Gastrocnemius medialis (tissue), 4 donors: ENCODE measurements at regions of chr1 and their contacts with region 1.

Region 1: GRCh38 chr1:34162852-34163766 is 1.9 kb downstream of the CSMD2 start:
- DNase-seq: peak; percentile 8 to 17
- ATAC-seq: peak; percentile 58 to 68
- H3K4me3 ChIP-seq: peak overlapping the region; percentile 27 to 49 (median 43)
- H3K27ac ChIP-seq: no peak overlapping the region
- H3K4me1 ChIP-seq: peaks cover 10 to 11% of the 10 kb centered on the region in 2 donors
- H3K27me3 ChIP-seq: peaks cover 48 to 65% (median 63%) of the 10 kb centered on the region in 3 donors
- CTCF ChIP-seq: peak in 4 of 5 experiments; percentile 3 to 41 (median 32)
- POLR2A ChIP-seq: no peak

Region 2: GRCh38 chr1:33633019-33633801 is 529.9 kb before region 1 on chr1:
- in situ Hi-C with region 1: loop called in 1 of 4 experiments (anchors 25 kb)
- intact Hi-C with region 1: loop called (anchors 5 kb)
- DNase-seq: peak; percentile 72 to 79
- ATAC-seq: peak; percentile 87 to 94
- H3K4me3 ChIP-seq: no peak overlapping the region
- H3K27ac ChIP-seq: no peak overlapping the region
- H3K4me1 ChIP-seq: no peaks in the 10 kb centered on the region
- H3K27me3 ChIP-seq: no peaks in the 10 kb centered on the region
- CTCF ChIP-seq: peak; percentile 62 to 96 (median 81)
- POLR2A ChIP-seq: no peak

Region 3: GRCh38 chr1:33735621-33736020 is 427.5 kb before region 1 on chr1:
- in situ Hi-C with region 1: loop called in 1 of 4 experiments (anchors 25 kb)
- intact Hi-C with region 1: no loop called
- DNase-seq: no peak
- ATAC-seq: no peak
- H3K4me3 ChIP-seq: no peak overlapping the region
- H3K27ac ChIP-seq: no peak overlapping the region
- H3K4me1 ChIP-seq: no peaks in the 10 kb centered on the region
- H3K27me3 ChIP-seq: no peaks in the 10 kb centered on the region
- CTCF ChIP-seq: no peak
- POLR2A ChIP-seq: no peak

Region 4: GRCh38 chr1:34272152-34272551 is 109.0 kb after region 1 on chr1:
- in situ Hi-C with region 1: no loop called
- intact Hi-C with region 1: no loop called
- DNase-seq: no peak
- ATAC-seq: no peak
- H3K4me3 ChIP-seq: no peak overlapping the region
- H3K27ac ChIP-seq: no peak overlapping the region
- H3K4me1 ChIP-seq: no peaks in the 10 kb centered on the region
- H3K27me3 ChIP-seq: no peaks in the 10 kb centered on the region
- CTCF ChIP-seq: no peak
- POLR2A ChIP-seq: no peak